ENCODE measurements at regions of chr7 and their contacts with region 1.

Region 1: GRCh38 chr7:47714669-47715607 is 133.0 kb upstream of the TNS3 start:
- DNase-seq: no peak
- H3K4me3 ChIP-seq: no peak overlapping the region
- CTCF ChIP-seq: no peak

Region 2: GRCh38 chr7:47681249-47681810 is 33.6 kb before region 1 on chr7:
- in situ Hi-C with region 1: loop called (anchors 5 kb)
- DNase-seq: no peak
- H3K4me3 ChIP-seq: no peak overlapping the region
- CTCF ChIP-seq: no peak

Region 3: GRCh38 chr7:48140001-48140681 is 425.2 kb after region 1 on chr7:
- in situ Hi-C with region 1: no loop called
- DNase-seq: no peak
- H3K4me3 ChIP-seq: no peak overlapping the region
- CTCF ChIP-seq: no peak